ENCODE measurements at regions of chr17 and their contacts with region 1.

Region 1: DNA sequence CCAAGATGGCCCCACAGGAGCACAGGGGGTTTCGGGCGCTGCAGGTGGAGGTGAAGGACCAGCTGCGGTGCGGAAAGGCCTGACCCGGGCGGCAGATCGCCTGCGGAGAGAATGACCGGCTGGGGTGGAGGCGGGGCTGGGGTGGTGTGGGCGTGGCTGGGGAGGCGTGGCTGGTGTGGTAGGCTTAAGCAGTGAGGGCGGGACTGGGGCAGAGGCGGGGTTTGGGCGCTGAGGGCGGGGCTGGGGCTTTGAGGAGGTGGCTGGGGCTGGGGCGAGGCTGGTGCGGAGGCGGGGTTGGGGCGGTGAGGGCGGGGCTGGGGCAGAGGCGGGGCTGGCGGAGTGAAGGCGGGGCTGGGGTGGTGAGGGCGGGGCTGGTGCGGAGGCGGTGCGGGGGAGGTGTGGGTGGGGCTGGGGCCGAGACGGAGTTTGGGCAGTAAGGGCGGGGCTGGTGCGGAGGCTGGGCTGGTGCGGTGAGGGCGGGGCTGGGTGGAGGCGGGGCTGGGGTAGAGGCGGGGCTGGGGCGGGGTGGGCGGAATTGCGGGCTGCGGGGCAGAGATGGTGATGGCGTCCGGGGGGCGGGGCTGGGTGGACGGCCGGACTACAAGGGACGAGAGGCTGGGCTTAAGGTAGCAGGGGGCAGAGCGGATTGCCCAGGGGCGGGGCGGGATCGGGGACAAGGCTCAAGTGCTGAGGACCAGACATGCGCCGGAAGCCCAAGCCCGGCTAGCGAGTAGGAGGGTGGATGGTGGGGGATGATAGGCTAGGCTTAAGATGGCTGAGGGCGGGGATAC is 9.9 kb upstream of the GSDMA start:
- DNase-seq: peak; percentile 97
- ATAC-seq: peak; percentile 86
- H3K4me3 Mint-ChIP-seq: peak overlapping the region; percentile 77
- H3K27ac Mint-ChIP-seq: peak overlapping the region; percentile 88
- H3K4me1 Mint-ChIP-seq: peaks cover 29% of the 10 kb centered on the region
- H3K27me3 Mint-ChIP-seq: peaks cover 2% of the 10 kb centered on the region

Region 2: GRCh38 chr17:39927101-39927928 is 25.6 kb before region 1 on chr17 and contains the starts of genes LRRC3C and ORMDL3:
- CTCF ChIA-PET with region 1: interaction called, 11 read pairs
- POLR2A ChIA-PET with region 1: interaction called, 6 read pairs
- DNase-seq: peak; percentile 94
- ATAC-seq: peak; percentile 81
- H3K4me3 Mint-ChIP-seq: peak within 1 kb of the TSS; percentile 86
- H3K27ac Mint-ChIP-seq: peak within 1 kb of the TSS; percentile 88
- H3K4me1 Mint-ChIP-seq: peaks cover 53% of the 10 kb centered on the region
- H3K27me3 Mint-ChIP-seq: no peaks in the 10 kb centered on the region
- total RNA-seq, gene LRRC3C: not detected
- total RNA-seq, gene ORMDL3: 151 to 168 TPM

Measured in activated CD8-positive, alpha-beta T cell treated with anti-CD3 and anti-CD28 coated beads, Interleukin-2, amount 10 ng/mL, durations not matched to agents 7 days and 5 days (primary cell).